ENCODE measurements at regions of chr19 and their contacts with region 1.

Region 1: GRCh38 chr19:34269968-34270621 is 15.7 kb downstream of the GARRE1 start:
- DNase-seq: peak; percentile 86
- H3K4me3 Mint-ChIP-seq: peak overlapping the region; percentile 68
- H3K27ac Mint-ChIP-seq: peak overlapping the region; percentile 92
- H3K4me1 Mint-ChIP-seq: peaks cover 71% of the 10 kb centered on the region
- H3K27me3 Mint-ChIP-seq: no peaks in the 10 kb centered on the region

Region 2: DNA sequence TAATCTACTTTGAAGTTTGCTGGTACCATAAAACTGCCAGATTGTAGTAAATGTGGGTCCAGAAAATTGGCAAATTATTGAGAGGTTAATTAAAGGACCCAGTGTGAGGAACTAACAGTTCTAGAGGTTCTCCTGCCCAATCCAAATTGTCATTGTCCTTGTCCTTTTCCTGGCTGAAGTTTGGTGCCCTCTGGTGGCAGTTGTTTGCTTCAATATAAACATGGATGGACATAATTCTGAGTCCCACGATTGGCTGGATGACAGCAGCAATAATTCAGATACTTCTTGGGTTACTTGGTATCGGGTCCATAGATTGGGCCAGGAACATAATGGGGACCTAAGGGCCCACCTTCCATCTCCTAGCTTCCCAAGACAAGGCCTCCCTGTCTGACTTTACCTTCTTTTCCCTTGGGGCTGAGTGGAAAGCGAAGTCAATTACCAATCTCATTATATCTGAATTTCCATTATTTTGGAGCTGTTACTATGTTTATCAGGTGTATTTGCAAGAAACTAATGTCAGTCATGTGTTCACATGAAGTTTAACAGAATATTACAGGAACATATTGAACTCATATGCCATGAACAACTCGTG is 49.5 kb before region 1 on chr19:
- CTCF ChIA-PET with region 1: no interaction called
- intact Hi-C with region 1: loop called (anchors 2 kb)
- DNase-seq: peak; percentile 83
- H3K4me3 Mint-ChIP-seq: no peak overlapping the region
- H3K27ac Mint-ChIP-seq: peak overlapping the region; percentile 59
- H3K4me1 Mint-ChIP-seq: peaks cover 54% of the 10 kb centered on the region
- H3K27me3 Mint-ChIP-seq: no peaks in the 10 kb centered on the region

Region 3: GRCh38 chr19:34253699-34254551 is 16.2 kb before region 1 on chr19:
- CTCF ChIA-PET with region 1: no interaction called
- intact Hi-C with region 1: loop called (anchors 1 kb)
- DNase-seq: peak; percentile 90
- H3K4me3 Mint-ChIP-seq: peak overlapping the region; percentile 94
- H3K27ac Mint-ChIP-seq: peak overlapping the region; percentile 94
- H3K4me1 Mint-ChIP-seq: peaks cover 32% of the 10 kb centered on the region
- H3K27me3 Mint-ChIP-seq: no peaks in the 10 kb centered on the region

Region 4: GRCh38 chr19:34336781-34337271 is 66.7 kb after region 1 on chr19:
- CTCF ChIA-PET with region 1: no interaction called
- intact Hi-C with region 1: loop called (anchors 1 kb)
- DNase-seq: peak; percentile 69
- H3K4me3 Mint-ChIP-seq: no peak overlapping the region
- H3K27ac Mint-ChIP-seq: no peak overlapping the region
- H3K4me1 Mint-ChIP-seq: peaks cover 9% of the 10 kb centered on the region
- H3K27me3 Mint-ChIP-seq: no peaks in the 10 kb centered on the region

Region 5: GRCh38 chr19:34351382-34351826 is 81.3 kb after region 1 on chr19:
- CTCF ChIA-PET with region 1: interaction called, 14 read pairs
- intact Hi-C with region 1: loop called (anchors 1 kb)
- DNase-seq: no peak
- H3K4me3 Mint-ChIP-seq: no peak overlapping the region
- H3K27ac Mint-ChIP-seq: peak overlapping the region; percentile 81
- H3K4me1 Mint-ChIP-seq: peaks cover 18% of the 10 kb centered on the region
- H3K27me3 Mint-ChIP-seq: no peaks in the 10 kb centered on the region

Region 6: GRCh38 chr19:35710784-35711723 is 1441.0 kb after region 1 on chr19:
- CTCF ChIA-PET with region 1: no interaction called
- intact Hi-C with region 1: loop called (anchors 5 kb)
- DNase-seq: peak; percentile 87
- H3K4me3 Mint-ChIP-seq: peak overlapping the region; percentile 52
- H3K27ac Mint-ChIP-seq: peak overlapping the region; percentile 100
- H3K4me1 Mint-ChIP-seq: peaks cover 44% of the 10 kb centered on the region
- H3K27me3 Mint-ChIP-seq: no peaks in the 10 kb centered on the region